Activated naive CD4-positive, alpha-beta T cell treated with anti-CD3 and anti-CD28 coated beads for 36 hours (primary cell): ENCODE measurements at regions of chr10 and their contacts with region 1.

Region 1: DNA sequence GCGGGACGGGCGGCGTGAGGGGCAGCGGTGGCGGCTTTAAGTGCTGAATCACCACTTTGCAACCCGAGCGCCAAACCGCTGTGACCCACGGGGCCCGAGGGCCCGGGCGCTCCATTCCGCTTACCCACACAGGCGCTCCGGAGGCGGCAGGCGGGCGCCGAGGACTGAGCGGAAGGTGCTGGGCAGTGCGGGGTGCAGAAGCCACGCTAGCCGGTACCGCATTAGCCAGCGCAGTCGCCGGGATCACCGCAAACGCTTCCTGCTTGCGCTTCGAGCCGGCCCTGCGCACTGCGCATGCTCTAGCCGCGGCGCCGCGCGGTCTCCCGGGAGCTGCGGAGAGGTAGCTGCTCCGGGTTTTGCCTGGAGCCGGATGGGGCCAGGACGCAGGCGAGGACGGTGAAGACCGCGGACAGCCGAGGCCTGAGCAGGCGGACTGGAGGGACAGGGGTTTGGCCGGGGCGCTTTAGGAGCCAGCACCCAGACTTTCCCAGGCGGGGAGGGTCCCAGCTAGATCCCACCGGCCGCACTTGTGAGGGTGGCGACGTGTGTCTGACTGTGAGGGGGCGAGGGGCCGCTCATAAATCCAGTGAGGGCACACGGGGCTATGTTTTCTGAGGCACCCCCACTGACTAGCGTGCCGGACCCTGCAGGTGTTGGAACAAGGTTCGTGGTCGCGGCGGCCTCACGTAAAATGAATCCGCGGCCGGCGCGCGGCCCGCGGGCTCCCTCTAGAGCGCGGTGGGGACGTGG is at the start of gene IDE:
- DNase-seq: peak; percentile 88
- H3K4me3 Mint-ChIP-seq: peak within 1 kb of the TSS; percentile 81
- H3K27ac Mint-ChIP-seq: peak within 1 kb of the TSS; percentile 85
- H3K4me1 Mint-ChIP-seq: peaks cover 34% of the 10 kb centered on the region
- H3K27me3 Mint-ChIP-seq: no peaks in the 10 kb centered on the region
- total RNA-seq, gene IDE: 30.8 to 31.2 TPM

Region 2: DNA sequence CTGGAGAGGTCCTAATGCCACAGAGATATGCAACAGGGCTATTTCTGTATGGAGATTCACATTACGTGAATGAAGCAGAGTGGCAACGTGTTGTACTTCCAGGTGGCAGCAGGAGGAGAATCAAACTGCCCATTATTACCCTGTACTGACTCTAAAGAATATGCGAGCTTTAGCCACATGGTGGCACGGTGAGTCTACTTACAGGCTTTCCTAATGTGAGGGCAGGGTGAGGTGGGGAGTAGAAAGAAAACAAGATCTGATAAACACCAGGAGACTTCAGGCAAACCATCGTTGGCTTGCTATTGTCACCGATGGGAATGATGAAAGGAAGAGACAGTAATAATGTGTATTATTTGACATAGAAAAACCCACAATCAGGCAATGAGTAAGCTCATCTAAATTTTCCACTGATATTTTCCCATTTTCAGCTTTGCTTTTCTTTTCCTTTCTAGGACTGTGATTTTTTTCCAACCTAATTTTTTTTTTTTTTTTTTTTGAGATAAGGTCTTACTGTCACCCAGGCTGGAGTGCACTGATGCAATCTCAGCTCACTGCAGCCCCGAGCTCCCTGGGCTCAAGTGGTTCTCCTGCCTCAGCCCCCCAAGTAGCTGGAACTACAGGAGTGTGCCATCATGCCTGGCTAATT is 486.1 kb before region 1 on chr10:
- CTCF ChIA-PET with region 1: no interaction called
- intact Hi-C with region 1: loop called (anchors 1 kb)
- DNase-seq: peak; percentile 79
- H3K4me3 Mint-ChIP-seq: no peak overlapping the region
- H3K27ac Mint-ChIP-seq: no peak overlapping the region
- H3K4me1 Mint-ChIP-seq: peaks cover 6% of the 10 kb centered on the region
- H3K27me3 Mint-ChIP-seq: no peaks in the 10 kb centered on the region

Region 3: DNA sequence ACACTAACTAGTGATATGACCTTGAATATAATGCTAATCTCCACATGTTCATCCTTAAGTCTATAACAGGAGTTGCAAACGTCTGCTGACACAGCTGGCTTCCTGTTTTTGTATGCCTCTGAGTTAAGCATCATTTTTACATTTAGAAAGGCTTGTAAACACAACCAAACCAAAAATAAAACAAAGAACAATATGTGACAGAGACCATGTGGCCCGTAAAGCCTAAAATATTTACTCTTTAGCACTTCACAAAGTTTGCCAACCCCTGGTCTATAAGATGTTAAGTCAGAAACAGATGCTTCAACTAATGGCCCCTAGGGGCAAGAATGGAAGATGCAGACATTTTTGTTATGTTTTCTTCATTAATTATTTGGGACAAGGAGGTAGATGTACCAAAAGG is 392.4 kb before region 1 on chr10:
- CTCF ChIA-PET with region 1: no interaction called
- intact Hi-C with region 1: no loop called
- DNase-seq: no peak
- H3K4me3 Mint-ChIP-seq: no peak overlapping the region
- H3K27ac Mint-ChIP-seq: no peak overlapping the region
- H3K4me1 Mint-ChIP-seq: no peaks in the 10 kb centered on the region
- H3K27me3 Mint-ChIP-seq: no peaks in the 10 kb centered on the region

Region 4: GRCh38 chr10:92240289-92241157 is 333.4 kb before region 1 on chr10:
- CTCF ChIA-PET with region 1: interaction called, 4 read pairs
- intact Hi-C with region 1: loop called (anchors 2 kb)
- DNase-seq: peak; percentile 30
- H3K4me3 Mint-ChIP-seq: peak overlapping the region; percentile 73
- H3K27ac Mint-ChIP-seq: no peak overlapping the region
- H3K4me1 Mint-ChIP-seq: peaks cover 13% of the 10 kb centered on the region
- H3K27me3 Mint-ChIP-seq: peaks cover 9% of the 10 kb centered on the region

Region 5: GRCh38 chr10:92267343-92267742 is 306.6 kb before region 1 on chr10:
- CTCF ChIA-PET with region 1: no interaction called
- intact Hi-C with region 1: no loop called
- DNase-seq: peak; percentile 5
- H3K4me3 Mint-ChIP-seq: no peak overlapping the region
- H3K27ac Mint-ChIP-seq: no peak overlapping the region
- H3K4me1 Mint-ChIP-seq: peaks cover 5% of the 10 kb centered on the region
- H3K27me3 Mint-ChIP-seq: no peaks in the 10 kb centered on the region

Region 6: DNA sequence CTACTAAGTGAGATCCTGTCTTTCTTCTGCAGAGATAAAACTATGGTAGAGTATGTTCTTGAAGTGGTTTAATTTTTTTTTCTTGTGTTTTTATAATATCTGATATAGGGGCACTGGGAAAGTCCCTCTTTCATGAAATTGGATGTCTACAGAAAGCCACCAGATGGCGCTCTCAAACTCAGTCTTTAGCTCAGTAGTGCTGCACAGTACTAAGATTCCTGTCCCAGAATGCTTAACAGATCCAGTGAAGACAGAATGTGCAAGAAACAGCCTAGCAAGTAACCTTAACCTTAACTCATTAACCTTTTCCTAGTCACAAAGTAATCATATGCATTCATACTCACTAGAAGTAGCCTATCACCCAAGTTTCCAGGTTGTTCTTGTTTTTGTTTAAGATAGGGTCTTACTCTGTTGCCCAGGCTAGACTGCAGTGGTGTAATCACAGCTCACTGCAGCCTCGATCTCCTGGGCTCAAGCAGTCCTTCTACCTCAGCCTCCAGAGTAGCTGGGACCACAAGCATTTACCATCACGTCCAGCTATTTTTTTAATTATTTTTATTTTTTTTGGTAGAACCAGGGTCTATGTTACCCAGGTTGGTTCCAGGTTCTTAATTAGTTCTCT is 56.8 kb before region 1 on chr10:
- CTCF ChIA-PET with region 1: interaction called, 55 read pairs
- intact Hi-C with region 1: loop called (anchors 1 kb)
- DNase-seq: peak; percentile 78
- H3K4me3 Mint-ChIP-seq: no peak overlapping the region
- H3K27ac Mint-ChIP-seq: no peak overlapping the region
- H3K4me1 Mint-ChIP-seq: peaks cover 6% of the 10 kb centered on the region
- H3K27me3 Mint-ChIP-seq: no peaks in the 10 kb centered on the region

Region 7: DNA sequence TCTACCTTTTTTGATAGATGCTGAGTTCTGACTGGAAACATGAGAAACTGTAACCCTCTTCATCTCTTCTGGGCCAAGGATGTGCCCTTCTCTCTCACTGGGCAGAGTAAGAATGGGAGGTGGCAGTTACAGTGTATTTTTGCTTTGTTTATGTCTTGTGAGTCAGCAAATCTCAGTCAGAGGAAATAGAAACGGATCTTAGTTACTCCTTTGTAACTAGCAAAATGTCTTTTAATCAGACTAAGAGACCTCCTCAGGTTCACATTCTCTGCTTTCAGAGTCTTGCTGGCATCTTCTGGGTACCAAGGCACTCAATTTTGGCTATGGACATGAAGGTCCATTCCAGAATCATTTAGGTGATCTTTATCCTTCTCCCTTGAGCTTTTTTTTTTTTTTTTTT is 186.6 kb after region 1 on chr10:
- CTCF ChIA-PET with region 1: no interaction called
- intact Hi-C with region 1: no loop called
- DNase-seq: no peak
- H3K4me3 Mint-ChIP-seq: no peak overlapping the region
- H3K27ac Mint-ChIP-seq: no peak overlapping the region
- H3K4me1 Mint-ChIP-seq: peaks cover 10% of the 10 kb centered on the region
- H3K27me3 Mint-ChIP-seq: peaks cover 4% of the 10 kb centered on the region

Region 8: DNA sequence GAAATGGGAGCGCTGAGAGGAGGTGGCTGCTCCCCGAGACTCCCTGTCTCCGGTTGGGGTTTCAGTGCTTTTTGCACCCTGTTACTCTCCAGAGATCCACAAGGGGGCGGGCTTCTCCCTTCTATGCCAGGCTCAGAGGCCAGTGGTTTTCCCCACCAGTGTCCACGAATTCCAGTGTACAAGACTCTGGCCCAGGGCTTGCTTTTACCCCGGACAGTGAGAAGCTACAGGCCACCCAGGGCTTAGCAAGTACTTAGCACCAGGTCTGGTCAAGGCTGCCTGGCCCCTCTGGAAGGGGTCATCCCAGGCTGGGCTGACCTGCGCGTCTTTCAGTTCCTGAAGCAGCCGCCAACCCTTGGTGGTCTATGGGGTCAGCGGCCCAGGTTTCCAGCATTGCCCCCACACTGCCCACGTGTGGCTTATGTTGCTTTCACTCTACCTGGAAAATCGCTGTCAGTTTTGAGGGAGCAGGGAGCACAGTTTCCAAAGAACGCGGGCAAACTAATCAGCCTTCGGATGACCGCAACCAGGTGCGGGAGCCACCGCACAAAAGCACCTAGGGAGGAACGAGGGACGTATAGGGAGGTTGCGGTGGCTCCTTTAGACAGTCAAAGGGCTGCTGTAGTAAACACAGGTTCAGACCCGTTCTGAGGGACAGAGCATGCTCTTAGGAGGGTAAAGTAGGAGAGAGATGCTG is 506.5 kb after region 1 on chr10:
- CTCF ChIA-PET with region 1: no interaction called
- intact Hi-C with region 1: no loop called
- DNase-seq: peak; percentile 70
- H3K4me3 Mint-ChIP-seq: no peak overlapping the region
- H3K27ac Mint-ChIP-seq: no peak overlapping the region
- H3K4me1 Mint-ChIP-seq: peaks cover 6% of the 10 kb centered on the region
- H3K27me3 Mint-ChIP-seq: peaks cover 38% of the 10 kb centered on the region